ENCODE measurements at regions of chr3 and their contacts with region 1.

Region 1: DNA sequence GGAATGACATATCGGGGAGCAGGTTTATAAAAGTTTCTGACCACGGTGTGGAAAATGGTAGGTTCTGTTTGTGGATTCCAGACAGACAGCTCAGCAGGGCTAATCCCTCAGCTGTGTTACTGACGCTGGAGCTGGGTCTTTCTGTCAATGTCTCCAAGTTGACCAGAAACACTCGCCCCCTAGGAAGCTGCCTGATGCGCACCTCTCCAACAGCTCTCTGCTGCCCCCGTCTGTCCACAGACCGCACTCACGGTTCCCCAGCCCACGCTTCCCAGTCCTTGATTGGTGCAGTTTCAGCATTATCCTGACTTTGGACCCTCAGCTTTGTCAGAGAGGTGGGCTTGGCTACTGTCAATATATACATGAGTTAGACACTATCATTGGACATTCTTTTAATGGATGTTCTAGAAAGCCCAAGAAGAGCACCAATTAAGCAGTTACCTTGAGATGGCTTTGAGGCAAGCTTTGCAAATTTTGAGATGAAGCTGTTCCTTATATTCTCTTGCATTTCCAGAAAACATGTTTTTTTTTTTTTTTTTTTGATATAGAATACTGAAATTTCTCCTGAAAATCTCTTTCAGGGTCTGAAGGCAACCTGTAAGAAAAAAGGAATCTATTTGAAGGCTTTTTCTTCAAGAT is 98.9 kb upstream of the TBC1D5 start:
- H3K4me3 Mint-ChIP-seq: no peak overlapping the region
- H3K27ac Mint-ChIP-seq: no peak overlapping the region
- H3K4me1 Mint-ChIP-seq: peaks cover 5% of the 10 kb centered on the region
- H3K27me3 Mint-ChIP-seq: no peaks in the 10 kb centered on the region

Region 2: DNA sequence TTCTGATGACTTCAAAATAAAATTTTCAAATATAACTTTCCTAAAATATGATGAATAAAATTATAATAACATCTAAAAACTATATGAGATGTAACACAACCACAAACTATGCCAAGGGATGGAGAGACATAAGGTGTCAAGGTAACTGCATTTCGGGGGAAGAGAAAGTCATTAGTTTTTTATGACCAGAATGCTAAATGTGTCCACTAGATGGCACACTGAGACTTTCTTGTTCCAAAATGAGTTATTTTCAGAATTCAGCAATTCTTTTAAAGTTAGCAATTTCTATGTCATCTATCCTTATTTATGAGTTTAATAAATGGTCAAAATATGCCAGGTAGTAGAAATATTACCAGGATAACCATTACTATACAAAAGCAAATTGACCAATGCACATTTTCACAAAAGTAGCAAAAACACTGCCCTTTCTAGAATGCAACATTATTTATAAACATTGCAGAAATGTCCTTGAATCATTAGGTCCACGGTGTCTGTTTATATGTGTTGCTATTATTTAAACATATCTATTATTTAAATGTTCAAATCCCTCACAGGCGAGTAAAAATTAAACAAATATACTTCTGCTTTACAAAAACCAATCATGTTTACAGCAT is 582.4 kb before region 1 on chr3:
- intact Hi-C with region 1: loop called (anchors 2 kb)
- H3K4me3 Mint-ChIP-seq: no peak overlapping the region
- H3K27ac Mint-ChIP-seq: no peak overlapping the region
- H3K4me1 Mint-ChIP-seq: no peaks in the 10 kb centered on the region
- H3K27me3 Mint-ChIP-seq: no peaks in the 10 kb centered on the region

Region 3: DNA sequence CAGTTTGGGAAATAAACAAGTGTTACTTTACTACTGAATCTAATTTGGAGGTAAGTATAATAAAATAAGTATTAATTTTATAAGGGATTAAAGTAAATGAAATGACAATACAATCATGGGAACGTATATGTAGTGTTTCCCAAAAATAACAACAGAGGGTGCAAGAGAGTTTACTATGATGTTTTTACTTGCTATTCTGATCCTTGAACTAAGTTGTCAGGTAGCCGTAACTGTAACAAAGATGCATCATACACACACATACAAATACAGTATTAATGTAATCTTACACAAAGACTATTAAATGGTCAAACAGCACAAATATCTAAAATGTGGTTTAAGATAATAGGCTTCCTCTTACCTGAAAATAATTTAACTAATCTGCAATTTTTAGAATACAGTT is 410.3 kb before region 1 on chr3:
- intact Hi-C with region 1: loop called (anchors 1 kb)
- H3K4me3 Mint-ChIP-seq: no peak overlapping the region
- H3K27ac Mint-ChIP-seq: no peak overlapping the region
- H3K4me1 Mint-ChIP-seq: peaks cover 9% of the 10 kb centered on the region
- H3K27me3 Mint-ChIP-seq: no peaks in the 10 kb centered on the region

Region 4: DNA sequence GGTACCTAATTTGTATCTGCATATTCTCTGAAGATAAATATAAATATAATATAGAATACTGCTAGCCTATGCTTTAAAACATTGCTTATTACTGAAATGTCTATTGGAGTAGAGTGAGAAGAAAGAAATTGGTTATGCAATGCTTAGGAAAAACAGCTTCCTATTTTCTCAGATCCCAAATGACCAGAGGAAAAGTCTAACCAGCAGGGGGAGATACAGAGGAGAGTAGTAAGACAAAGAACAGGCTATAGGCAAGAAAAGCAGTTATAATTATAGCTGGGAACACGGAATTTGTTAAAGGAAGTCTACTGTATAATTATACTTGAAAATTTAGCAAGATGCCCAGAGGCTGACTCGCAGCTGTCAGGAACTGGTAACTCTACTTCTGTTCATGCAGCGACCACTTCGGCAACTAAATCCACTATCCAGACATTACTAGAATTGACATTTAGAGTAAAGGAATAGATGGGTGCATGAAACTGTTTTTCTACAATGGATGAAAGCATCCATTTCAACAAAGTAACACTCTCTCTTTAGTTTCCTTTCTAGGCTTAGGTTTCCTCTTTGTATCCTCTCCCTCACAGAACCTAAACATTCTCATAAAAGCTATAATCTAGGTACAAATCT is 196.1 kb before region 1 on chr3:
- intact Hi-C with region 1: loop called (anchors 2 kb)
- H3K4me3 Mint-ChIP-seq: no peak overlapping the region
- H3K27ac Mint-ChIP-seq: no peak overlapping the region
- H3K4me1 Mint-ChIP-seq: no peaks in the 10 kb centered on the region
- H3K27me3 Mint-ChIP-seq: no peaks in the 10 kb centered on the region

Region 5: DNA sequence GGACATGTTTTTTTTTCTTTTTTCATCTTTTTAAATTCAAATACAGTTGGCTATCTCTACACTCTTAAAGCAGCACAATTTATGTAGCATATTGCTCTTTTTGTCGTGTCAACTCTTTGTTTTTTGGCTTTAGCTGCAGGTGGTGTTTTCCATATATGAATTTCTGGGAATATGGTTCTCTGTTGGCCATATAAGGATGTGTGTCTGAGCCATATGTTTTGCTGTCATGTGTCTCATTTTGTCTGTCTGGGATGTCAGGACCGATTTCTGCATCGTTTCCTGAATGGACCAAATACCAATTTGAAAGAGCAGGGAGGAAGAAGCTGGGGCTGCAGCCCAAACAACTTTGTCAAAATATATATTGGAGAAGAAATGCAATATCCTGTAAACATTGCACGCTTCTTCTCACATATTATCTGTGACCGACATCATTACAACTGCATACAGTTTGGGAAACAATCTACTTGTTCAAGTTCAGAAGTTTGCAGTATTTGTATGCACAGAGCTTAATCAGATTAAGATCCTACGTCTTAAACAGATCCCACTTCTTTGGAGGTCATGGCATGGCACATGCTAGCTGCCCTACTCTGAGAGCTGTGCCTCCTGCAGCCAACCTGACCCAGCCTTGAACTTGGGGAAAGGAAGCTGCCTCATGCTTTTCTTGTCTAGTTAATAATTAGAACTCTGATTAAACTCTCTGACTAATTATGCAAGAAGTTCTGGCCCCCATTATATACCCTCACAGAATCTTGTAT is 587.9 kb after region 1 on chr3:
- intact Hi-C with region 1: no loop called
- H3K4me3 Mint-ChIP-seq: no peak overlapping the region
- H3K27ac Mint-ChIP-seq: no peak overlapping the region
- H3K4me1 Mint-ChIP-seq: peaks cover 24% of the 10 kb centered on the region
- H3K27me3 Mint-ChIP-seq: peaks cover 4% of the 10 kb centered on the region